Naive thymus-derived CD4-positive, alpha-beta T cell (primary cell): ENCODE measurements at regions of chr16 and their contacts with region 1.

Region 1: GRCh38 chr16:30065143-30065850 is at the start of gene ALDOA:
- DNase-seq: peak; percentile 82 to 97 (median 92)
- ATAC-seq: peak; percentile 90
- H3K4me3 ChIP-seq: peak within 1 kb of the TSS; percentile 94
- H3K4me3 Mint-ChIP-seq: peak within 1 kb of the TSS; percentile 96 to 100 (median 99)
- H3K27ac ChIP-seq: peak within 1 kb of the TSS; percentile 83
- H3K27ac Mint-ChIP-seq: peak within 1 kb of the TSS; percentile 90 to 99 (median 98)
- H3K4me1 ChIP-seq: peaks cover 13 to 37% of the 10 kb centered on the region in 2 donors
- H3K4me1 Mint-ChIP-seq: peaks cover 22 to 43% (median 35%) of the 10 kb centered on the region in 7 donors
- H3K27me3 ChIP-seq: no peaks in the 10 kb centered on the region
- H3K27me3 Mint-ChIP-seq: no peaks in the 10 kb centered on the region
- total RNA-seq, gene ALDOA: 356 to 1,619 (median 584) TPM

Region 2: GRCh38 chr16:29995911-29996772 is 69.2 kb before region 1 on chr16 and contains the start of gene INO80E:
- CTCF ChIA-PET with region 1: no interaction called
- POLR2A ChIA-PET with region 1: no interaction called
- intact Hi-C with region 1: loop called in 1 of 2 experiments (anchors 1 kb)
- DNase-seq: peak; percentile 94 to 99 (median 98)
- ATAC-seq: peak; percentile 99
- H3K4me3 ChIP-seq: peak within 1 kb of the TSS; percentile 100
- H3K4me3 Mint-ChIP-seq: peak within 1 kb of the TSS; percentile 86 to 99 (median 98)
- H3K27ac ChIP-seq: peak within 1 kb of the TSS; percentile 99
- H3K27ac Mint-ChIP-seq: peak within 1 kb of the TSS; percentile 93 to 99 (median 97)
- H3K4me1 ChIP-seq: peaks cover 16 to 18% of the 10 kb centered on the region in 2 donors
- H3K4me1 Mint-ChIP-seq: peaks cover 24 to 53% (median 38%) of the 10 kb centered on the region in 7 donors
- H3K27me3 ChIP-seq: no peaks in the 10 kb centered on the region
- H3K27me3 Mint-ChIP-seq: no peaks in the 10 kb centered on the region
- total RNA-seq, gene INO80E: 71.7 to 141 (median 95.8) TPM

Region 3: GRCh38 chr16:30091474-30092372 is 26.4 kb after region 1 on chr16 and contains the start of gene TBX6:
- CTCF ChIA-PET with region 1: interaction called, 10 read pairs
- POLR2A ChIA-PET with region 1: interaction called, 177 read pairs
- intact Hi-C with region 1: loop called (anchors 1 kb)
- DNase-seq: peak; percentile 85 to 96 (median 91)
- ATAC-seq: peak; percentile 87
- H3K4me3 ChIP-seq: peak within 1 kb of the TSS; percentile 60
- H3K4me3 Mint-ChIP-seq: peak within 1 kb of the TSS; percentile 87 to 96 (median 93)
- H3K27ac ChIP-seq: peak within 1 kb of the TSS; percentile 77
- H3K27ac Mint-ChIP-seq: peak within 1 kb of the TSS; percentile 92 to 97 (median 95)
- H3K4me1 ChIP-seq: peaks cover 32 to 47% of the 10 kb centered on the region in 2 donors
- H3K4me1 Mint-ChIP-seq: peaks cover 43 to 65% (median 50%) of the 10 kb centered on the region in 7 donors
- H3K27me3 ChIP-seq: no peaks in the 10 kb centered on the region
- H3K27me3 Mint-ChIP-seq: no peaks in the 10 kb centered on the region
- total RNA-seq, gene TBX6: 1.5 to 3.3 (median 1.6) TPM

Region 4: GRCh38 chr16:30183233-30184095 is 118.2 kb after region 1 on chr16 and contains the start of gene CORO1A:
- CTCF ChIA-PET with region 1: interaction called, 4 read pairs
- POLR2A ChIA-PET with region 1: interaction called, 94 read pairs
- intact Hi-C with region 1: loop called in 1 of 2 experiments (anchors 1 kb)
- DNase-seq: peak; percentile 71 to 89 (median 85)
- ATAC-seq: peak; percentile 72
- H3K4me3 ChIP-seq: peak within 1 kb of the TSS; percentile 100
- H3K4me3 Mint-ChIP-seq: peak within 1 kb of the TSS; percentile 96 to 99 (median 98)
- H3K27ac ChIP-seq: peak within 1 kb of the TSS; percentile 85
- H3K27ac Mint-ChIP-seq: peak within 1 kb of the TSS; percentile 91 to 97 (median 96)
- H3K4me1 ChIP-seq: peaks cover 28 to 36% of the 10 kb centered on the region in 2 donors
- H3K4me1 Mint-ChIP-seq: peaks cover 19 to 36% (median 28%) of the 10 kb centered on the region in 7 donors
- H3K27me3 ChIP-seq: no peaks in the 10 kb centered on the region
- H3K27me3 Mint-ChIP-seq: no peaks in the 10 kb centered on the region
- total RNA-seq, gene CORO1A: 609 to 1,666 (median 826) TPM

Region 5: DNA sequence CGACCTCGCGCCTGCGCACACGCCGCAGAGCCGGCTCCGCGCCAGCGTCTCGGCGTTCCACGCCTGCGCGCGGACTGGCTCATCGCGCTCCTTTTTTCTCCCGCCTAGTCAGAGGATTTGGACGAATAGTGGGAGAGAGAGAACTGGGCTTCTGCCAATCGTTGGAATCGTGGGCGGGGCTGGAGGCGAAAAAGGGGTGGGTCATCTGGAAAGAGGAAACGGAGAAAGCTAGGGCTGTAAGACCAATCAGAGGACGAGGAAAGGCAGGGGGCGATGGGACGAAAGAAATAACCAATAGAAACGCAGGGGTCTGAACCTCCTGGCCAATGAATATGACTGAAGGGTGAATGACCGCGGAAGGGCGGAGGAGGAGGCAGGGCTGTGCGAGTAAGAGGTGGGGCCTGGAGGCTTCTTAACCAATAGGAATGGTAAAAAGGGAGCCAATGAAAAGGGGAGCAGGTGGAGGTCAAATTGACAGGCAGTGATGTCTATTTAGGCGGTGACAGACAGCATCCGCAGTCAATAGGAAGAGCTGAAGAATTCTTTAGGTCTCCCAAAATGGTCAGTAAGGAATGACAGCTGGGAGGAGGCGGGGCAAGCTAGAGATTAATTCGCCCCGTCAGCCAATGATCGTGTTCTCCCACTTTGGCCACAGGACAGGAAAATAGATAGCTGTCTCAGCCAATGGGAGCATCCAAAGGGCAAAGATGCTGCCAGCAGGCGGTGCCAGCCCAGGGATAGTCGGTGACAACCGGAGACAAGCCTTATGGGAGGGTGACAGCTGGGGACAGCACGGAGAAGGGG is 305.3 kb after region 1 on chr16 and contains the start of gene TBC1D10B:
- CTCF ChIA-PET with region 1: interaction called, 8 read pairs
- POLR2A ChIA-PET with region 1: interaction called, 6 read pairs
- intact Hi-C with region 1: loop called in 1 of 2 experiments (anchors 1 kb)
- DNase-seq: peak; percentile 89 to 100 (median 100)
- ATAC-seq: peak; percentile 91
- H3K4me3 ChIP-seq: peak within 1 kb of the TSS; percentile 76
- H3K4me3 Mint-ChIP-seq: peak within 1 kb of the TSS; percentile 83 to 92 (median 89)
- H3K27ac ChIP-seq: peak within 1 kb of the TSS; percentile 80
- H3K27ac Mint-ChIP-seq: peak within 1 kb of the TSS; percentile 63 to 98 (median 93)
- H3K4me1 ChIP-seq: peaks cover 24 to 25% of the 10 kb centered on the region in 2 donors
- H3K4me1 Mint-ChIP-seq: peaks cover 42 to 54% (median 50%) of the 10 kb centered on the region in 7 donors
- H3K27me3 ChIP-seq: no peaks in the 10 kb centered on the region
- H3K27me3 Mint-ChIP-seq: peaks cover 0 to 3% (median 0%) of the 10 kb centered on the region in 5 donors
- total RNA-seq, gene TBC1D10B: 23.2 to 70.0 (median 45.2) TPM

Region 6: DNA sequence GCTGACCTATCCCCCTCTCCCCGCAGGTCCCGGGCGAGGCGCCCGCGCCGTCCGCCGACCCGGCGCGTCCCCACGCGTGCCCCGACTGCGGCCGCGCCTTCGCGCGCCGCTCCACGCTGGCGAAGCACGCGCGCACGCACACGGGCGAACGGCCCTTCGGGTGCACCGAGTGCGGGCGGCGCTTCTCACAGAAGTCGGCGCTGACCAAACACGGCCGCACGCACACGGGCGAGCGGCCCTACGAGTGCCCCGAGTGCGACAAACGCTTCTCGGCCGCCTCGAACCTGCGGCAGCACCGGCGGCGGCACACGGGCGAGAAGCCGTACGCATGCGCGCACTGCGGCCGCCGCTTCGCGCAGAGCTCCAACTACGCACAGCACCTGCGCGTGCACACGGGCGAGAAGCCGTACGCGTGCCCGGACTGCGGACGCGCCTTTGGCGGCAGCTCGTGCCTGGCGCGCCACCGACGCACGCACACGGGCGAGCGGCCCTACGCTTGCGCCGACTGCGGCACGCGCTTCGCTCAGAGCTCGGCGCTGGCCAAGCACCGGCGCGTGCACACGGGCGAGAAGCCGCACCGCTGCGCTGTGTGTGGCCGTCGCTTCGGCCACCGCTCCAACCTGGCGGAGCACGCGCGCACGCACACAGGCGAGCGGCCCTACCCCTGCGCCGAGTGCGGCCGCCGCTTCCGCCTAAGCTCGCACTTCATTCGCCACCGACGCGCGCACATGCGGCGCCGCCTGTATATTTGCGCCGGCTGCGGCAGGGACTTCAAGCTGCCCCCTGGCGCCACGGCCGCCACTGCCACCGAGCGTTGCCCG is 352.4 kb after region 1 on chr16:
- CTCF ChIA-PET with region 1: no interaction called
- POLR2A ChIA-PET with region 1: interaction called, 17 read pairs
- intact Hi-C with region 1: no loop called
- DNase-seq: peak; percentile 79 to 93 (median 88)
- ATAC-seq: peak; percentile 95
- H3K4me3 ChIP-seq: peak overlapping the region; percentile 76
- H3K4me3 Mint-ChIP-seq: peak overlapping the region; percentile 54 to 80 (median 70)
- H3K27ac ChIP-seq: peak overlapping the region; percentile 85
- H3K27ac Mint-ChIP-seq: peak overlapping the region in 7 of 9 donors; percentile 69 to 88 (median 81)
- H3K4me1 ChIP-seq: peaks cover 6 to 8% of the 10 kb centered on the region in 2 donors
- H3K4me1 Mint-ChIP-seq: peaks cover 12 to 31% (median 14%) of the 10 kb centered on the region in 7 donors
- H3K27me3 ChIP-seq: no peaks in the 10 kb centered on the region
- H3K27me3 Mint-ChIP-seq: no peaks in the 10 kb centered on the region

Region 7: DNA sequence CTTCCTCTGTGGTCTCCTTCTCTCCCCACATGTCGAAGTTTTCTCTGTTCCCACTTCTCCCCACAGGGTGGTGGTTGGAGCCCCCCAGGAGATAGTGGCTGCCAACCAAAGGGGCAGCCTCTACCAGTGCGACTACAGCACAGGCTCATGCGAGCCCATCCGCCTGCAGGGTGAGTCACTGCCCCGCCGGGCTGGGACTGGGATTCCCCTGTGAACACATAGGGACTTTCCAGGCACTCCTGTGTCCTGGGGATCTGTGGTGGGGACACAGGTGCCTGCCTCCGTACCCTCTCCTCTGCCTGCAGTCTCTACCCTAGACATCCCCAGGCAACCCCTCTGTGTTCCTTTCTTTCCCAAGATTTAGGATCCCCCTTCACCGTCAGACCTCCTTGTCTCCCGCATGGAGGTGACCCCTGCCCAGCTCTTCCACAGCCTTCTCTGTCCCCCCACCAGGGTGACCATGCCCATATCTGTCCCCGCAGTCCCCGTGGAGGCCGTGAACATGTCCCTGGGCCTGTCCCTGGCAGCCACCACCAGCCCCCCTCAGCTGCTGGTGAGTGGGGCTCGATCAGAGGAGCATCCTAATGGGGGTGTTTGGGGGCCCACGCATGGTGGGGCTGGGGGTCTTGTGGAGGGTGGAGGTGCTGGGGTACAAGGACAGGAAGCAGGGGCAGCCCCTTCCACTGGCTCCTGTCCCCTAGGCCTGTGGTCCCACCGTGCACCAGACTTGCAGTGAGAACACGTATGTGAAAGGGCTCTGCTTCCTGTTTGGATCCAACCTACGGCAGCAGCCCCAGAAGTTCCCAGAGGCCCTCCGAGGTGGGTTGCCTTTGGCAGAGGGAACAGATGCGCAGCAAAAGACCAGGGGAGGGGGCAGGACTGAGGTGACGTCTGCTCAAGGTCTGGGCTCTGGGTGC is 1200.3 kb after region 1 on chr16:
- CTCF ChIA-PET with region 1: no interaction called
- POLR2A ChIA-PET with region 1: no interaction called
- intact Hi-C with region 1: no loop called
- DNase-seq: peak in 2 of 9 donors; percentile 22 to 81
- ATAC-seq: peak; percentile 93
- H3K4me3 ChIP-seq: no peak overlapping the region
- H3K4me3 Mint-ChIP-seq: peak overlapping the region in 2 of 10 donors; percentile 49 to 68
- H3K27ac ChIP-seq: no peak overlapping the region
- H3K27ac Mint-ChIP-seq: peak overlapping the region in 2 of 9 donors; percentile 61 to 93
- H3K4me1 ChIP-seq: peaks cover 0 to 16% of the 10 kb centered on the region in 2 donors
- H3K4me1 Mint-ChIP-seq: peaks cover 0 to 57% (median 6%) of the 10 kb centered on the region in 7 donors
- H3K27me3 ChIP-seq: no peaks in the 10 kb centered on the region
- H3K27me3 Mint-ChIP-seq: peaks cover 0 to 18% (median 4%) of the 10 kb centered on the region in 5 donors